GM13977 (cell line): ENCODE measurements at regions of chr12 and their contacts with region 1.

Region 1: DNA sequence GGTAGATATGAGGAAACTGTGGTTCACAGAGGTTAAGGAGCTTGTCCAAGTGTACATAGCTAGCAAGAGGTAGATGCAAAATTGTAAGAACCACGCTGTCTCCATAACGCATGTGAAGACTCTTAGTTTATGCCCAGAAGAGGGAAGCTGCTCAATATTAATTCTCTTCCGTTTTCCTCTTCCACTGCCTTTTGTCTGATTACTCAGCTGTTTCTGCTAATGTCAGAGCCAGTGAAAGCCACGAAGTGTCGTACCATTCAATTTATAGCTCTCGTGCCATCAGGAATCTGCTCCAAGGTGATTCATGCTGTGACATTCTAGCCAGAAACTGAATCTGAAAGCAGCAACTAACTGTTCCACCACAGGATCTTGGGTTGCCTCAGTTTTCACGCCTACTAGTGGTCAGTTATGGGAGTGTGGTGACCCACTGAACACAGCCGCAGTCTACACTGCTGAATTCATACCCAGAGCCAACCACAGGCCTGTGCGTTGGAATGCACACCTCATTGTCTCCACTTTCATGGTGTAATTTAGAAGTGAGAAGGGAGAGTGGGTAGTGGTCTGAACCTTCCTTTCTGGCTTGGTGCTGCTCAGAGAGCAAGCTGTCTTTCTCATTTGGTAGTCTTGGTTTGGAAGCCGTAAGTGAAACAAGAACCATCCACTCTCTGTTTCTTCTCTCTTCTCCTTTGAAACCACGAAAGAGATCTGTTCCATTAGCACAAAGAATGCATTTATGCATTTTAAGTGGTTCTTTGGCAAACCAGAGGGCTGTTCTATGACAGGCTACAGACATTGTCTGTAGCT is 74.2 kb upstream of the NAP1L1 start:
- DNase-seq: peak; percentile 68
- CTCF ChIP-seq: peak; percentile 58

Region 2: GRCh38 chr12:75917083-75917482 is 241.6 kb before region 1 on chr12:
- in situ Hi-C with region 1: no loop called
- DNase-seq: peak; percentile 13
- CTCF ChIP-seq: no peak

Region 3: GRCh38 chr12:75944097-75944904 is 214.4 kb before region 1 on chr12:
- in situ Hi-C with region 1: no loop called
- DNase-seq: peak; percentile 68
- CTCF ChIP-seq: no peak

Region 4: GRCh38 chr12:76074701-76075336 is 83.9 kb before region 1 on chr12:
- in situ Hi-C with region 1: loop called (anchors 10 kb)
- DNase-seq: no peak
- CTCF ChIP-seq: no peak